MCF 10A (cell line): ENCODE measurements at regions of chr2 and their contacts with region 1.

Region 1: GRCh38 chr2:168118733-168119514 is 128.5 kb downstream of the STK39 start:
- DNase-seq: peak; percentile 74
- H3K4me3 Mint-ChIP-seq: no peak overlapping the region
- H3K27ac Mint-ChIP-seq: no peak overlapping the region
- H3K4me1 Mint-ChIP-seq: no peaks in the 10 kb centered on the region
- H3K27me3 Mint-ChIP-seq: no peaks in the 10 kb centered on the region
- CTCF ChIP-seq: peak; percentile 54

Region 2: GRCh38 chr2:166539340-166540162 is 1579.4 kb before region 1 on chr2:
- CTCF ChIA-PET with region 1: interaction called, 117 read pairs
- POLR2A ChIA-PET with region 1: no interaction called
- intact Hi-C with region 1: loop called (anchors 1 kb)
- DNase-seq: peak; percentile 81
- H3K4me3 Mint-ChIP-seq: no peak overlapping the region
- H3K27ac Mint-ChIP-seq: no peak overlapping the region
- H3K4me1 Mint-ChIP-seq: no peaks in the 10 kb centered on the region
- H3K27me3 Mint-ChIP-seq: peaks cover 72% of the 10 kb centered on the region
- CTCF ChIP-seq: peak; percentile 72

Region 3: DNA sequence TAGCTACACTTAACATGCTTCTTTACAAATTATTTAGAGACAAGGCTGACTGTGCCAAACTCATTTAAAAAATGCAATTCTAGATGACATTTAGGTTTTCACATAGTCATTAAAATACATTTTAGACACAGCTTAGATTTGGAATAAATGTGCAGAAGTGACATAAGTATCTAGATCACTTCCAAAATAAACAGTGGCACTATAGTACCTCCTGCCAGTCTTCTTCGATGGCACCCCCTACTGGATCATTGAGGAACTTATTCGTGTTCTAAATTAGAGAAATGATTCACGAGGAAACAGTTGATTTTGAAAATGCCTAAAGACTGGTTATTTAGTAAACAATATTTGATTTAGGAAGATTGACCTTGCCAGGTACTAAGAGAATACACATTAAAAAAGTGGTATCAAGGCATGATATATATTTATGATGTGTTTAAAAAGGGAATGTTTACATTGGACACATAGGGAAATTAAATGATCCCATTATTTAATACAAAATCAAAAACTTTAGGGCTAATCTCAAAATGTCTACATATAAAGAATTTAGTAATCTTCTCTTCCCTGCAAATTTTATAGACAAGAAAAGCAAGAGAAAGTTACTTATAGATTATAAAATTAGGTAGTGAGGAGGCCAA is 906.8 kb before region 1 on chr2:
- CTCF ChIA-PET with region 1: interaction called, 30 read pairs
- POLR2A ChIA-PET with region 1: no interaction called
- intact Hi-C with region 1: loop called (anchors 2 kb)
- DNase-seq: peak; percentile 75
- H3K4me3 Mint-ChIP-seq: no peak overlapping the region
- H3K27ac Mint-ChIP-seq: no peak overlapping the region
- H3K4me1 Mint-ChIP-seq: no peaks in the 10 kb centered on the region
- H3K27me3 Mint-ChIP-seq: no peaks in the 10 kb centered on the region
- CTCF ChIP-seq: peak; percentile 60

Region 4: GRCh38 chr2:167342769-167343168 is 776.2 kb before region 1 on chr2:
- CTCF ChIA-PET with region 1: interaction called, 4 read pairs
- POLR2A ChIA-PET with region 1: no interaction called
- intact Hi-C with region 1: loop called (anchors 5 kb)
- DNase-seq: no peak
- H3K4me3 Mint-ChIP-seq: no peak overlapping the region
- H3K27ac Mint-ChIP-seq: no peak overlapping the region
- H3K4me1 Mint-ChIP-seq: no peaks in the 10 kb centered on the region
- H3K27me3 Mint-ChIP-seq: peaks cover 57% of the 10 kb centered on the region
- CTCF ChIP-seq: no peak

Region 5: GRCh38 chr2:167675906-167676305 is 443.0 kb before region 1 on chr2:
- CTCF ChIA-PET with region 1: no interaction called
- POLR2A ChIA-PET with region 1: no interaction called
- intact Hi-C with region 1: no loop called
- DNase-seq: no peak
- H3K4me3 Mint-ChIP-seq: no peak overlapping the region
- H3K27ac Mint-ChIP-seq: no peak overlapping the region
- H3K4me1 Mint-ChIP-seq: no peaks in the 10 kb centered on the region
- H3K27me3 Mint-ChIP-seq: no peaks in the 10 kb centered on the region
- CTCF ChIP-seq: no peak

Region 6: DNA sequence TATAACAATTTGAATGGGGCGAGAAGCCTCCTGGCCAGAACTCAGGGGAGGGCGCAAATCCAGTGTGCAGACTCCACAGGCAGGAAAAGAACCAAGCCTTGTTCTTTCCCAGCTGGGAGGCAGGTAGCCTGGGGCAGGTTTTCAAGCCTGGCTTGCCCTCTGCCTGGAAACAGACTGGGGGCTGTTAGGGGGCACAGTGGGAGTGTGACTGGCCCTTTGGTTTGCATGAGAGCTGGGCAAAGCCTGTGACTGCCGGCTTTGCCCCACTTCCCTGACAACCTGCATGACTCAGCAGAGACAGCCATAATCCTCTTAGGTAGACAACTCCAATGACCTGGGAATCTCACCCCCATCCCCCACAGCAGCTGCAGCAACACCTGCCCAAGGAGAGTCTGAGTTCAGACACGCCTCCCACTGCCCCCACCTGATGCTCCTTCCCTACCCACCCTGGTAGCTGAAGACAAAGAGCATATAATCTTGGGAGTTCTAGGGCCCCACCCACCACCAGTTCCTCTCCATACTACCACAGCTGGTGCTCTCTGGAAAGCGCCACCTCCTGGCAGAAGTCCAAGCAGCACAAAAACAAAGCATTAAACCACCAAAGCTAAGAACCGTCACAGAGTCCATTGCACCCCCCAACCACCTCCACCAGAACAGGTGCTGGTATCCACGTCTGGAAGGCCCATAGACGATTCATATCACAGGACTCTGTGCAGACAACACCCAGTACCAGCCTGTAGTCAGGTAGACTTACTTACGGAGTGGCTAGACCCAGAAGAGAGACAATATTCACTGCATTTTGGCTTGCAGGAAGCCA is 274.0 kb before region 1 on chr2:
- CTCF ChIA-PET with region 1: no interaction called
- POLR2A ChIA-PET with region 1: no interaction called
- intact Hi-C with region 1: no loop called
- DNase-seq: peak; percentile 34
- H3K4me3 Mint-ChIP-seq: no peak overlapping the region
- H3K27ac Mint-ChIP-seq: no peak overlapping the region
- H3K4me1 Mint-ChIP-seq: no peaks in the 10 kb centered on the region
- H3K27me3 Mint-ChIP-seq: peaks cover 37% of the 10 kb centered on the region
- CTCF ChIP-seq: no peak

Region 7: GRCh38 chr2:168097431-168097830 is 21.5 kb before region 1 on chr2:
- CTCF ChIA-PET with region 1: interaction called, 105 read pairs
- POLR2A ChIA-PET with region 1: no interaction called
- intact Hi-C with region 1: no loop called
- DNase-seq: peak; percentile 82
- H3K4me3 Mint-ChIP-seq: no peak overlapping the region
- H3K27ac Mint-ChIP-seq: no peak overlapping the region
- H3K4me1 Mint-ChIP-seq: peaks cover 6% of the 10 kb centered on the region
- H3K27me3 Mint-ChIP-seq: no peaks in the 10 kb centered on the region
- CTCF ChIP-seq: no peak

Region 8: GRCh38 chr2:168130346-168130745 is 11.4 kb after region 1 on chr2:
- CTCF ChIA-PET with region 1: interaction called, 58 read pairs
- POLR2A ChIA-PET with region 1: no interaction called
- intact Hi-C with region 1: no loop called
- DNase-seq: no peak
- H3K4me3 Mint-ChIP-seq: no peak overlapping the region
- H3K27ac Mint-ChIP-seq: no peak overlapping the region
- H3K4me1 Mint-ChIP-seq: peaks cover 5% of the 10 kb centered on the region
- H3K27me3 Mint-ChIP-seq: no peaks in the 10 kb centered on the region
- CTCF ChIP-seq: no peak